Breast epithelium (tissue), 4 donors: ENCODE measurements at regions of chr16 and their contacts with region 1.

Region 1: GRCh38 chr16:3480901-3481695 is 14.2 kb downstream of the C16orf90 start:
- DNase-seq: no peak
- H3K4me3 ChIP-seq: no peak overlapping the region
- H3K27ac ChIP-seq: no peak overlapping the region
- H3K4me1 ChIP-seq: no peaks in the 10 kb centered on the region
- H3K27me3 ChIP-seq: no peaks in the 10 kb centered on the region
- CTCF ChIP-seq: no peak
- POLR2A ChIP-seq: no peak

Region 2: DNA sequence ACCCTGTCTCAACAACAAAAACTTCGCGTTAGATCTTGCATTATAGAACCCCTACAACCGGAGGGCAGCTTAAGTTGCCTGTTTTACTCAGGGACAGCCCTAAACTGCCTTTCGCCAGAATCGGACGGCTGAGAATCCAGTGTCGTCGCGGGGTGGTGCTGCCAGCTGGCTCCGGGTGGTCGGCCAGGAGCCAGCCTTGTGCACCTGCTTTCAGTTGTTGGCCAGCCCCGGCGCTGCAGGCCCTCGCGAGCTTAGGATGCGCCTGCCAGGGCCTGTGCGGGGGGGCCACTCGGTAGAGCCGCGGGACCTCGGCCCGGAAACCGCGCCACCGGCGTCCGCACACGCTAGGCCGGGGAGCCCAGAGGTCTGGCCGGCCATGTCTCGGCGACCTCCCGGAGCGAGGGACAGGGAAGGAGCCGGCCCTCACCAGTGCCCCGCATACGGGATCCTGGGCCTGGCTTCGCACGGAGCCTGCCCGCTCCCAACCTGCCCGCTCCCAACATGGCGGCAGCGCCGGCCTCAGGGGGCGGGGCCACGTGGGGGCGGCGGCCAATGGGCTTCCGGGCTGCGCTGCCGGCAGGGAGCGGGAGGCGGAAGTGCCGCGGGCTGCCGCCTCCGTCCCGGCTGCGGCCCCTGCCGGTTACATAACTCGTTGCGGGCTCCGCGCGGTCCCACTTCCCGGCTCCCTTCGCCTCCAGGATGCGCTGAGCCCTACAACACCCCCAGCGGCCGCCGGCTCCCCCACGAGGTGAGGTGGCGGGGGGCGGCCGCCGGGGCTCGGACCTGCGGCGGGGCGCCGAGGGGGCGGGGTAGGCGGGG is 23.5 kb before region 1 on chr16:
- intact Hi-C with region 1: no loop called
- DNase-seq: peak; percentile 83 to 87
- H3K4me3 ChIP-seq: peak overlapping the region; percentile 82 to 91 (median 86)
- H3K27ac ChIP-seq: peak overlapping the region; percentile 96
- H3K4me1 ChIP-seq: peaks cover 0 to 3% of the 10 kb centered on the region in 2 donors
- H3K27me3 ChIP-seq: no peaks in the 10 kb centered on the region
- CTCF ChIP-seq: peak in 1 of 3 donors; percentile 46
- POLR2A ChIP-seq: no peak

Region 3: GRCh38 chr16:3509470-3509928 is 28.4 kb after region 1 on chr16:
- intact Hi-C with region 1: no loop called
- DNase-seq: peak; percentile 67 to 84
- H3K4me3 ChIP-seq: no peak overlapping the region
- H3K27ac ChIP-seq: peak overlapping the region; percentile 29
- H3K4me1 ChIP-seq: no peaks in the 10 kb centered on the region
- H3K27me3 ChIP-seq: no peaks in the 10 kb centered on the region
- CTCF ChIP-seq: no peak
- POLR2A ChIP-seq: no peak

Region 4: DNA sequence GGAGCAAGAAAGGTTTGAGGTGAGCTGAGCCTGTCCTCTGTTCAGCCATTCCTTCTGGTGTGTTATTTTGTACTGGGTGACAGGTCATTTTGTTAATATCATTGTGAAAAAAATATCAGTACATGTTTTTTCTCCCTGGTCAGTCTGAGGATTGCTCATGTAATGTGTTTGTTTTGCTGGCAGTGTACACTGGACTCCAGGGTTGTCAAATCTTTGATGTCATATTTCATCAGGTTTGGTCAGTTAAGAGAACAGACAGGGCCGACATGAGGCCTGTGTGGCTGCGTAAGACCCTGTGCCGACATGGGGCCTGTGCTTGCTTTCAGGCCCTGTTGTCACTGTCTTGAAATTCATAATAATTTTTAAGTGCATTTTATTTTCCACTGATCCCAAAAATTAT is 42.2 kb after region 1 on chr16:
- intact Hi-C with region 1: loop called (anchors 2 kb)
- DNase-seq: no peak
- H3K4me3 ChIP-seq: no peak overlapping the region
- H3K27ac ChIP-seq: no peak overlapping the region
- H3K4me1 ChIP-seq: no peaks in the 10 kb centered on the region
- H3K27me3 ChIP-seq: no peaks in the 10 kb centered on the region
- CTCF ChIP-seq: no peak
- POLR2A ChIP-seq: no peak